ENCODE measurements at regions of chr14 and their contacts with region 1.

Region 1: DNA sequence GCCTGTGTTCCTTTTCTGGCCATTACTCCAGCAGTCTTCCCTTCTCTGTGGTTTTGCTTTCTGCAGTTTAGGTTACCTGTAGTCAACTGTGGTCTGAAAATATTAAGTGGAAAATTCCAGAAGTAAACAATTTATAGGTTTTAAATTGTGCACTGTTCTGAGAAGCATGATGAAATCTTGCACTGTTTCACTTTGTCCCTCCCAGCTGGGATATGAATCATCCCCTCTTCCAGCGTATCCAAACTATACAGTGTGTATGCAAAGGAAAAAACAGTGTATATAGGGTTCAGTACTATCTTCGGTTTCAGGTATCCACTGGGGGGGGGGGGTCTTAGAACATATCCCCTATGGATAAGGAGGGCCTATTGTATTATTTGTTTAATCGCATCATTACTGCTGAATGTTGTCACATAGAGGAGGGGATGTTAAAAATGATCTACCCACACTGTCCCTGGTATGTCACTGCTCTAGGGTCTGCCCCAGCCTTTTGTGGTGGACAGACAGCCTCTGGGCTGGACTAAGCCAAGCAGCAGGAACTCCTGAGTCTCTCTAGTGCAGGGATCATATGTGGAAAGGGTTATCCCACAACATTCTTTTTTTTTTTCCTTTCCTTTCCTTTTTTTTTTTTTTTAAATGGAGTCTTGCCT is 109.1 kb upstream of the MAX start:
- DNase-seq: no peak
- ATAC-seq: peak; percentile 35
- H3K4me3 Mint-ChIP-seq: peak overlapping the region; percentile 51
- H3K27ac Mint-ChIP-seq: peak overlapping the region; percentile 88
- H3K4me1 Mint-ChIP-seq: peaks cover 54% of the 10 kb centered on the region
- H3K27me3 Mint-ChIP-seq: no peaks in the 10 kb centered on the region

Region 2: DNA sequence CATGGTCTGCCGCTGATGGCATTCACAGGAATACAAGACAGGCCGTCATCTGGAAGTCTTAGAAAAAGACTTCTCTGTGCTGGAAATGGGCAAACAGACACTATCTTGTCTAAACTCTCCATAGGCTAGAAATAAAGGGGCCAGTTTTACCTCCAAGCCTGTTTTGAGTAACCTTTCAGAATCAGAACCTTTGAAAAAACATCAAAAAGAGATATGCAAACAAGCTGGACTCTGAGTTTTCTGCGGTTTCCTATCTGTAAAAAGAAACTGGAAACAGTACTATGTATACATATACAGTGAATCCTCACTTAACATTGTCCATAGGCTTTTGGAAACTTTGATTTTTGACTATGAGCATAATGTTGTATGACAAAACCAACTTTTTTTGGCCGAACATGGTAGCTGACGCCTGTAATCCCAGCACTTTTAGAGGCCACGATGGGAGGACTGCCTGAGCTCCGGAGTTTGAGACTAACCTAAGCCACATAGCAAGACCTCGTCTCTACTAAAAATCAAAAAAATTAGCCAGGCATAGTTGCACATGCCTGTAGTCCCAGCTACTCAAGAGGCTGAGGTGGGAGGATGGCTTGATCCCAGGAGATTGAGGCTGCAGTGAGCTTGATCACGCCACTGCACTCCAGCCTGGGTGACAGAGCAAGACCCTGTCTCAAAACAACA is 16.3 kb before region 1 on chr14:
- CTCF ChIA-PET with region 1: no interaction called
- DNase-seq: no peak
- ATAC-seq: no peak
- H3K4me3 Mint-ChIP-seq: no peak overlapping the region
- H3K27ac Mint-ChIP-seq: no peak overlapping the region
- H3K4me1 Mint-ChIP-seq: peaks cover 7% of the 10 kb centered on the region
- H3K27me3 Mint-ChIP-seq: no peaks in the 10 kb centered on the region

Region 3: DNA sequence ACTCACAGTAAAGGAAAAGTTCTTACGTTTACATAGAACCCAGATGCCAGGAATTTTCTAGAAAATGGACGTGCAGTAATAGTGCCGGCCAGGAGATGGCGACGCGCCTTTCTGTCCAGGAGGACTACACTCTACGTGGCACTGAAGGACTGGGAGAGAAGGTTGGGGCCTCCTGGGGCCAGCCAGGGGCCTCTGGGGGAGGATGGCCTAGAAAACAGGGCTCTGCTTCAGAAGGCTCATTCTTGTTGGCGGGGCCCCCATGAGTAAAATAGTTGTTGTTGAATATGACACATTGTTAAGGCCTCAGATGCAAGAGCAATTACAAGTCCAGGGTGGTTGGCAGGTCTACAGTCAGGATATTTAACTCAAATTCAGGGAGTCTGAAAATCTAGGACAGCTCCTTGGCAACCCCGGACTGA is 11.0 kb after region 1 on chr14:
- CTCF ChIA-PET with region 1: interaction called, 11 read pairs
- DNase-seq: peak; percentile 71
- ATAC-seq: peak; percentile 85
- H3K4me3 Mint-ChIP-seq: no peak overlapping the region
- H3K27ac Mint-ChIP-seq: peak overlapping the region; percentile 37
- H3K4me1 Mint-ChIP-seq: peaks cover 42% of the 10 kb centered on the region
- H3K27me3 Mint-ChIP-seq: no peaks in the 10 kb centered on the region

Measured in activated CD8-positive, alpha-beta memory T cell treated with anti-CD3 and anti-CD28 coated beads, Interleukin-2, amount 10 ng/mL, durations not matched to agents 7 days and 5 days (primary cell).